Posterior vena cava (tissue), 2 donors: ENCODE measurements at regions of chr3 and their contacts with region 1.

Region 1: DNA sequence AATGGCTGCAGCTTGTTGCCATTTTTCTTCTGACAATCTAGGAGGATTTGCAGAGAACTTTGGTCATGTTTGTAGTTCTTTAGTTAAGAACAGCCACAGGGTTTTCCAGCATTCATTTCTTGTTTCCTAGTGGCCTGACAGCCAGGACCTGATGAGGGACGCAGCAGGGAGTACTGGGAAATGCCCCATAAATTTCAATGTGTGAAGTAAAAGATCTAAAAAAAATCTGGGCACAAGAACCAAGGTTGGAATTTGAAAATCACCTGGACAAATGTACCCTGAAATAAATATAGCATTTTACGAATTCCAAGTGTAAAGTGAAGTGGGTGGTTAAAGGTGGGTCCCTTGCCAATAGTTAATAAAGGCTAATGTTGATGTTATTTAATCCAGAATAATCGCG is 195.0 kb downstream of the ZIC1 start:
- DNase-seq: no peak

Region 2: DNA sequence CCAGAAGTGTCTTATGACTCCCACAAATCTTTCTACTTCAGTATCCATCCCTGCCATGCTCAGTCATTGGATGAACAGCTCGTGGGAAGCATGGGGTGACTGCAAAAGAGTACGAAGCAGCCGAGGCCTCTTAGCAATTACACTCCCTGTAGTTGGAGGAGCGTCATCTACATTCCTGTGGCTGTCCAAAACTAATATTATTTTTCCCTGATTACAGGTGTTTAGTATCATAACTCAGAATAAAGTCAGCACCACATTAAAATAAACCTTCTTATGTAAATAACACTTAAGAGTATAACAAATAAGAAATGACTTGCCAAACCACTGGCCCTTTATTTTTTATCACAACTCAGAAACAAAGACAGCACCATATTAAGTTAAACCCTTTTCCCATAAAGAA is 1584.6 kb before region 1 on chr3:
- intact Hi-C with region 1: loop called in 1 of 2 experiments (anchors 10 kb)
- DNase-seq: no peak